Left ventricle myocardium inferior (tissue), 1 donor: ENCODE measurements at regions of chr16 and their contacts with region 1.

Region 1: DNA sequence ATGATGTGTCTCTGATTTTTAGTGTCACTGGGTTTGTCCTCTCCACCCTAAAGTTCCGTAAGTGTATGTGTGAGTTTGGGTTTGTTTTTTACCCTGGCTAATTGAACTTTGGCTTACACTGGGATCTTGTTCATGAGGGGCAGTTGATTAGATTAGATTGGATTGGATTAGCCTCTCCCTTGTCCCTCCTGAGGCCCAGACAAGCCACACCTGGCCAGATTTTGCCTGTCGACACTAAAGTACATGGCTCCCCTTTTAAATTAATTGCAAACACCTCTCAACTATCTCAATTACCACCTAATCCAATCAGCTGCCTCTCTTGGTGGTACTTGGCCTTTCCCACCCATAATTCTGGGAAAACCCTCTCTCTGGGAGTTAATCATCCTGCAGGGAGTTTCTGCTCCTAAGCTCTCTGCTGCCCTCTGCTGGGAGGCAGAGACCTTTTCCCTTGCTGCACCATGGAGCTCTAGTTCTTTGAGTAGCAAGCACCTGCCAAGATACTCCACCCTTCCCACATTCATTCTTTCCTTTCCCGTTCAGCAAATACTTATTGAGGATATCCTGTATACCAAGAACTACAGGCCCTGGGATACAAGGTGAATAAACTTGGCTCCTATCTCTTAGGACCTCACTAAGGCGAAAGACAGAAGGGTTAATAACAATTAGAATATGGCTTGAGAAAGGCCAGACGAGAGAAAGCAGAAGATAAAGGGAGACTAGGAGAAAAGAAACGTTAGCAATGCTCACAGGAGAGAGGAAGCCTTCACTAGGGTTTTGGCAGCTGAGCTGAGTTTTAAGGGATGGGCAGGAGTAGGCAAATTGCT is 60.0 kb upstream of the MPHOSPH6 start:
- DNase-seq: peak; percentile 46
- H3K4me3 ChIP-seq: no peak overlapping the region
- H3K27ac ChIP-seq: no peak overlapping the region
- H3K4me1 ChIP-seq: no peaks in the 10 kb centered on the region
- H3K27me3 ChIP-seq: peaks cover 31% of the 10 kb centered on the region
- CTCF ChIP-seq: peak; percentile 92

Region 2: GRCh38 chr16:81896900-81897299 is 333.1 kb before region 1 on chr16:
- intact Hi-C with region 1: loop called (anchors 10 kb)
- DNase-seq: no peak
- H3K4me3 ChIP-seq: no peak overlapping the region
- H3K27ac ChIP-seq: no peak overlapping the region
- H3K4me1 ChIP-seq: peaks cover 8% of the 10 kb centered on the region
- H3K27me3 ChIP-seq: no peaks in the 10 kb centered on the region
- CTCF ChIP-seq: no peak

Region 3: DNA sequence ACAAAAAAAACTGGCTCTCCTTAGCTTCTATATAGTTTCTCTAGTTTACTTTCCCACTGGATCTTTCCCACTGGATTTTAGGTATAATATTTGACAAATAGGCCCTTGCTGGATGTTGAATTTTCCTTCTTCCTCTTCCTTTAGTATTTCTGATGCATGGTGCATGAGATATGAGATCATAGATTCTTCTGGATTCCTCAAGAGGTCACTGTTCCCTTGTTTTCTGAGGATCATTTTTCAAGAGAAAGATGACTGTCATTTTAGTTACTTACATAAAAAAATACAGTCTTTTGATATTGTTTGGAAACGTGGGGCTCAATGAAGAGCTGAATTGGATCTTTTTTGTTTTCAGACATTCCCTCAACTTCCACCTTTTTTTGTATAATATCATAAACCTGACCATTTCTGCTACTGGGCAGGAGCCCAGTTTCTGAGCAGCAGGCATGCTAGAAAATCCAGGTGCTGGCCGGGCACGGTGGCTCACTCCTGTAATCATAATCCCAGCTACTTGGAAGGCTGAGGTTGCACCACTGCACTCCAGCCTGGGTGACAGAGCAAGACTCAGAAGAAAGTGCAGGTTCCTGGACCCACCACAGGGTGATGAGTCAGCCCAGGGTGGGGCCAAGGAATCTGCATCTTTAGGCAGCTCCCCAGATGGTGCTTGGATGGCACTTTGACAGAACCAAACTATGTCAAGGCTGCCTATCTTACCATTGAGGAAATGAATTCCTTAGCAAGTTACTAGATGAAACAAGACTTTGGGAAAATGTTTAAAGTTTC is 289.0 kb before region 1 on chr16:
- intact Hi-C with region 1: loop called (anchors 5 kb)
- DNase-seq: no peak
- H3K4me3 ChIP-seq: no peak overlapping the region
- H3K27ac ChIP-seq: no peak overlapping the region
- H3K4me1 ChIP-seq: no peaks in the 10 kb centered on the region
- H3K27me3 ChIP-seq: peaks cover 25% of the 10 kb centered on the region
- CTCF ChIP-seq: peak; percentile 64

Region 4: GRCh38 chr16:82181456-82182185 is 48.4 kb before region 1 on chr16:
- intact Hi-C with region 1: no loop called
- DNase-seq: no peak
- H3K4me3 ChIP-seq: no peak overlapping the region
- H3K27ac ChIP-seq: no peak overlapping the region
- H3K4me1 ChIP-seq: no peaks in the 10 kb centered on the region
- H3K27me3 ChIP-seq: peaks cover 64% of the 10 kb centered on the region
- CTCF ChIP-seq: no peak